ENCODE measurements at regions of chr2 and their contacts with region 1.

Region 1: DNA sequence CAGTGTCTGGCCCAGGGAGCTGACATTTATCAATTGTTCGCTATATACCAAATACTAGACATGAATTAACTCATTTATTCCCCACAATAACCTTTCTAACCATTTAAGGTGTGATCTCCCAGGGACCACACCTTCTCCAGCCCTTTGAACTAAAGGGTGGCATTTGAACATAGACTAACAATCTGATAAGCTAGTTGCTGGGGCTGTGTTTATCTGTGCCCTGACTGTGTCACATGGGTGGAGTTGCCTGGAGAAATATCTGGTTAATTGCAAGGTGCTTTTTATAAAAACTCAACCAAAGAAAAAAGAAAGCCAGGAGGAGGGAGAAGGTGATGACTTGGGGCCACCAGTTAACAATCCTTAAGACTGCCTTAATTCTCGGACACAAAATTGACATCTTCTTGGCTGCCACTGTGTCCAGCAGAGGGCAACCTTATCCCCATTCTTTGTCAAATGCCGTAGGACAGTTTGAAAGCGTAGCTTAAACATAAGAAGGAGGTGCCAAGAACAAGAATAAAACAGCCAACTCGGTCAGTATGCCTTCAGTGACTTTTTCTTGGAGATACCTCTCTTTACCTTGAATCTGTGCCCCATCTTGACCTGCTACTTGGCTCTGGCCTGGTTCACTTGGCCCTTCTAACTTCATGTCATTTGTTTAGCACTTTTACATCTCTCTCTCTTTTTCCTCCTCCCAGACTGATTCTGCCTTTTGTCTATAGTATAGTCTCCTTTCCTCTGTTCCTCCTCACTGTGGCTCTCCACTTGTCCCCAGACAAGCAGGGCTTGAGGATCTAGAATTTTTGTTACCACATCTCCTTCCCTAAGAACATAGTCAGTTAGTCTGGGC is 183.4 kb downstream of the MYO3B start:
- DNase-seq: peak; percentile 78
- ATAC-seq: peak; percentile 77
- H3K4me3 ChIP-seq: no peak overlapping the region
- H3K27ac ChIP-seq: no peak overlapping the region
- H3K4me1 ChIP-seq: peaks cover 15% of the 10 kb centered on the region
- H3K27me3 ChIP-seq: no peaks in the 10 kb centered on the region
- CTCF ChIP-seq: peak; percentile 90

Region 2: GRCh38 chr2:169933124-169933711 is 428.1 kb before region 1 on chr2:
- CTCF ChIA-PET with region 1: interaction called, 4 read pairs
- POLR2A ChIA-PET with region 1: no interaction called
- intact Hi-C with region 1: loop called (anchors 5 kb)
- DNase-seq: peak; percentile 70
- ATAC-seq: peak; percentile 37; the same call in 1 of the 2 replicates
- H3K4me3 ChIP-seq: no peak overlapping the region
- H3K27ac ChIP-seq: no peak overlapping the region
- H3K4me1 ChIP-seq: no peaks in the 10 kb centered on the region
- H3K27me3 ChIP-seq: no peaks in the 10 kb centered on the region
- CTCF ChIP-seq: peak; percentile 77

Region 3: GRCh38 chr2:170567429-170567828 is 206.1 kb after region 1 on chr2:
- CTCF ChIA-PET with region 1: no interaction called
- POLR2A ChIA-PET with region 1: no interaction called
- intact Hi-C with region 1: no loop called
- DNase-seq: no peak
- ATAC-seq: no peak
- H3K4me3 ChIP-seq: no peak overlapping the region
- H3K27ac ChIP-seq: no peak overlapping the region
- H3K4me1 ChIP-seq: no peaks in the 10 kb centered on the region
- H3K27me3 ChIP-seq: 0 out of 2 replicates have a peak, but pooled peaks cover 6% of the 10 kb centered on the region
- CTCF ChIP-seq: no peak

Measured in PC-3 (cell line).